Breast epithelium (tissue), 4 donors: ENCODE measurements at regions of chr3 and their contacts with region 1.

Region 1: GRCh38 chr3:155598671-155599070 is 146.2 kb downstream of the PLCH1 start:
- DNase-seq: no peak
- H3K4me3 ChIP-seq: no peak overlapping the region
- H3K27ac ChIP-seq: no peak overlapping the region
- H3K4me1 ChIP-seq: no peaks in the 10 kb centered on the region
- H3K27me3 ChIP-seq: no peaks in the 10 kb centered on the region
- CTCF ChIP-seq: no peak
- POLR2A ChIP-seq: no peak

Region 2: GRCh38 chr3:155643581-155644165 is 45.0 kb after region 1 on chr3:
- intact Hi-C with region 1: loop called (anchors 2 kb)
- DNase-seq: no peak
- H3K4me3 ChIP-seq: no peak overlapping the region
- H3K27ac ChIP-seq: no peak overlapping the region
- H3K4me1 ChIP-seq: no peaks in the 10 kb centered on the region
- H3K27me3 ChIP-seq: no peaks in the 10 kb centered on the region
- CTCF ChIP-seq: no peak
- POLR2A ChIP-seq: no peak